Sigmoid colon (tissue), 7 donors: ENCODE measurements at regions of chr17 and their contacts with region 1.

Region 1: DNA sequence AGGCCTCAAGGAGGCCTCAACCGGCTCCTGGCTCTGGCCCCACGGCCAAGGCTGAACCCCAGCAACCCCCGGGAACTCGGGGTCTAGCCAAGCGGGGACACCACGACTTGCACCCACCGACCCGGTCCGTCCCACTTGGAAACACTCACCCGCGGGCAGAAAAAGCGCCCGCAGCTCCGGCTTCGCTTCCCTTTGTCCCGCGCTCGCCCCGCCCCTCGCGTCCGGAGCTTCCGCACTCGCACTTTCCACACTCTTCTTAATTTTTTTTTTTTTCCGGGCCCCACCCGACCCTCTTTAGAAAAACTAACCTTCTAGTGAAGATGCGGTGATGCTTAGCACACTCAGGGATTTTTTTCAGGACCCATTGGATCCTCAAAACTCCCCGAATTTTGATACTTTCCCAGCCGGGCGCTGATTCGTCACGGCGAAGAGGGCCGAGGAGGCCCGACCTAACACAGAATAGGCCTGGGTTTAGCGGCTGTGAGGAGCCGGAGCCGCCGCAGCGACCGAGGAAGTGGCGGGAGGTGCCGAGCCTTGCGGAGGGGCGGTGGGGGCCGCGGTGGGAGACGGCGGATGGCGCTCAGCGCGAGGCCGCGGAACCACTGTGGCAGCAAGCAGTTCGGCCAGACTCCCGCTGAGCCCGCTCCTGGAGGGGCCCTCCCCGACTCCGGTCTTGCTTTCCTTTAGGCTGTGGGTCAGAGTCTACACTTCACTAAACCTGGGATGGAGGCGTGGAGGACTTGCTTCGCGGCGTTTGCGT is at the start of gene SMARCE1:
- DNase-seq: peak; percentile 84
- H3K4me3 ChIP-seq: peak within 1 kb of the TSS; percentile 62 to 87 (median 72)
- H3K27ac ChIP-seq: peak within 1 kb of the TSS; percentile 94 to 99 (median 98)
- H3K4me1 ChIP-seq: peaks cover 0 to 47% (median 30%) of the 10 kb centered on the region in 4 donors
- H3K27me3 ChIP-seq: no peaks in the 10 kb centered on the region
- CTCF ChIP-seq: no peak
- EP300 ChIP-seq: no peak
- POLR2A ChIP-seq: peak; percentile 35 to 37
- total RNA-seq, gene SMARCE1: 87.3 to 120 (median 94.4) TPM

Region 2: DNA sequence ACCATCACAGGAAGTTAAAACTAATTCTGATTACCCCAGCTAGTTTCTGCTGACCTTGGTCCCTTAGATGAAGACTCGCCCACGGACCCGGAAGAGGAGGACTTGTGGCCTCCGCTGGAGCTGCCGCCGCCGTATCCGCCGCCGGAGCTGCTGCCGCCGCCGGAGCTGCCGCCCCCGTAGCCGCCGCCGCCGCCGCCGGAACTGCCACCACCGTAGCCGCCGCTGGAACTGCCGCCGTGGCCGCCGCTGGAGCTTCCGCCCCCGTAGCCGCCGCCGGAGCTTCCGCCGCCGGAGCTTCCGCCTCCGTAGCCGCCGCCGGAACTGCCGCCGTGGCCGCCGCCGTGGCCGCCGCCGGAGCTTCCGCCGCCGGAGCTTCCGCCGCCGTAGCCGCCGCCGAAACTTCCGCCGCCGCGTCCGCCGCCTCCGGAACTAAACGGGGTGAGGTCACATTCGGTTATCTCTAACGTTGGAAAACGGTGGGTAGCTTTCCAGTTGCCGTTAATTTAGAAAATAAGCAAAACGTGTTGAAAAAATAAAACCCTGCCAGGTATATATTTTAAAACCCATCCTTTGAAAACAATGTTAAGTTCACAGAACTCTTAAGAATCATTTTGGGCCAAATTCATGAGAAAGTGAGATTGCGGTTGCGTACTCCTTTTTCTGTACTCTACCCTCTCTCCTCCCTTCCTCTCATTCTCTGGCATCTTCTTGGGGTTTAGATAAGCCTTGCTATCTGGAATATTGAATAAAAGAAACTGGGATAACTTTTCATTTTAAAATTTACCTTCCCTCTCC is 171.1 kb after region 1 on chr17:
- intact Hi-C with region 1: loop called (anchors 5 kb)
- DNase-seq: peak; percentile 86
- H3K4me3 ChIP-seq: peak overlapping the region; percentile 53 to 83 (median 72)
- H3K27ac ChIP-seq: peak overlapping the region; percentile 78 to 89 (median 82)
- H3K4me1 ChIP-seq: peaks cover 0 to 15% (median 0%) of the 10 kb centered on the region in 4 donors
- H3K27me3 ChIP-seq: no peaks in the 10 kb centered on the region
- CTCF ChIP-seq: no peak
- EP300 ChIP-seq: no peak
- POLR2A ChIP-seq: no peak